Activated CD4-positive, alpha-beta T cell treated with anti-CD3 and anti-CD28 coated beads for 36 hours (primary cell): ENCODE measurements at regions of chr14 and their contacts with region 1.

Region 1: GRCh38 chr14:56339855-56340701 is 221.9 kb downstream of the PELI2 start:
- DNase-seq: peak; percentile 77
- ATAC-seq: peak; percentile 73
- H3K4me3 Mint-ChIP-seq: no peak overlapping the region
- H3K27ac Mint-ChIP-seq: no peak overlapping the region
- H3K4me1 Mint-ChIP-seq: peaks cover 3% of the 10 kb centered on the region
- H3K27me3 Mint-ChIP-seq: no peaks in the 10 kb centered on the region

Region 2: GRCh38 chr14:55731881-55732498 is 608.1 kb before region 1 on chr14:
- CTCF ChIA-PET with region 1: interaction called, 10 read pairs
- POLR2A ChIA-PET with region 1: no interaction called
- intact Hi-C with region 1: loop called (anchors 1 kb)
- DNase-seq: peak; percentile 68
- ATAC-seq: no peak
- H3K4me3 Mint-ChIP-seq: no peak overlapping the region
- H3K27ac Mint-ChIP-seq: no peak overlapping the region
- H3K4me1 Mint-ChIP-seq: no peaks in the 10 kb centered on the region
- H3K27me3 Mint-ChIP-seq: no peaks in the 10 kb centered on the region

Region 3: GRCh38 chr14:55864890-55865655 is 475.0 kb before region 1 on chr14:
- CTCF ChIA-PET with region 1: no interaction called
- POLR2A ChIA-PET with region 1: no interaction called
- intact Hi-C with region 1: loop called in 1 of 2 experiments (anchors 10 kb)
- DNase-seq: no peak
- ATAC-seq: no peak
- H3K4me3 Mint-ChIP-seq: no peak overlapping the region
- H3K27ac Mint-ChIP-seq: no peak overlapping the region
- H3K4me1 Mint-ChIP-seq: no peaks in the 10 kb centered on the region
- H3K27me3 Mint-ChIP-seq: peaks cover 3% of the 10 kb centered on the region

Region 4: GRCh38 chr14:56273155-56273554 is 66.9 kb before region 1 on chr14:
- CTCF ChIA-PET with region 1: no interaction called
- POLR2A ChIA-PET with region 1: no interaction called
- intact Hi-C with region 1: no loop called
- DNase-seq: no peak
- ATAC-seq: no peak
- H3K4me3 Mint-ChIP-seq: no peak overlapping the region
- H3K27ac Mint-ChIP-seq: no peak overlapping the region
- H3K4me1 Mint-ChIP-seq: no peaks in the 10 kb centered on the region
- H3K27me3 Mint-ChIP-seq: no peaks in the 10 kb centered on the region

Region 5: DNA sequence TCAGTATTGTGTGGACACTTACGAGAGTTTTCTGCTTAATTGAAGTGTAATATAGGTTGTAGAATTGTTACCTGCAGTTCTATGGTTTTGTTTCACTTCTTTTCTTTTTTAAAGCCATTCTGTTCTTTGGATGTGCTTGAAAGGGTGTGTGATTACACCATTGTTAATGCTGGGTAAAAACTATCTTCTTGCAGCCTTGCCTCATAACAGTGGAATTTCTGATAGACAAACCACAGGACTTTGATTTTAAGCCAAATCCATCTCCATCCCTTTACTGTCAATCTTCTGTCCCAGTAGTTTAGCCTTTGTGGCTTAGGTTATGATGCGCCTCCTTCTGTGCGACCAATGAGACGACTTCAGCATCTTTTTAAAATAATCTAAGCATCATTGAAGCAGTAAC is 39.6 kb before region 1 on chr14:
- CTCF ChIA-PET with region 1: no interaction called
- POLR2A ChIA-PET with region 1: no interaction called
- intact Hi-C with region 1: no loop called
- DNase-seq: no peak
- ATAC-seq: no peak
- H3K4me3 Mint-ChIP-seq: no peak overlapping the region
- H3K27ac Mint-ChIP-seq: no peak overlapping the region
- H3K4me1 Mint-ChIP-seq: no peaks in the 10 kb centered on the region
- H3K27me3 Mint-ChIP-seq: no peaks in the 10 kb centered on the region

Region 6: DNA sequence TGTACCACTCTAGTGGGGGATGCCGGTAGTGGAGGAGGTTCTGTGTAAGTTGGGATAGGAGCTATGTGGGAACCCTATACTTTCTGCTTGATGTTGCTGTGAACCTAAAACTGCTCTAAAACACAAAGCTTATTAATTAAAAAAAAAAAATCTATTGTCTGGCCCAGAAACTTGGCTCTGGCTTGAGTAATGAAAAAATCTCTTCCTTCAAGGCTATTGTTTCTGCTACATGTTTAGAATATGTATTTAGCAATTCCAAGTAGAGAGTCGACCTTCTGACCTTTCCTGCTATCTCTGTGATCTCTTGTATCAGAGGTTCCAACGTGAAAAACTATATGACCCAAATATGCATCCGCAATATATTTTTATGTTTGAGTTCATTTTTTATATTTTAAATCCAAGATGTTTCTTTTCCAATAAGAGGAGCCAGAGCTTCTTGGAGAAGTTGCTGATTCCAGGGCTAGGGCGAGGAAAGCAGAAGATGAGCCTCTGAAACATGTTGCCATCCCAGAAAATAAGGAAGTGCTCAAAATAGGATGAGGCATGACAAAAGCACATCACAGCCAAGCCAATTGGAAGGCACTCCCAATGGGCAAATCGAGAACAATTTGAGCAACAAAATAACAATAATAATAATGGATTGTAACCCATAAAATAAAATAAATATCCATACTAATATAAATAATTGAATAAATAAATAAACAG is 54.9 kb after region 1 on chr14:
- CTCF ChIA-PET with region 1: interaction called, 4 read pairs
- POLR2A ChIA-PET with region 1: interaction called, 10 read pairs
- intact Hi-C with region 1: no loop called
- DNase-seq: no peak
- ATAC-seq: no peak
- H3K4me3 Mint-ChIP-seq: no peak overlapping the region
- H3K27ac Mint-ChIP-seq: no peak overlapping the region
- H3K4me1 Mint-ChIP-seq: no peaks in the 10 kb centered on the region
- H3K27me3 Mint-ChIP-seq: no peaks in the 10 kb centered on the region